Mammary epithelial cell (primary cell): ENCODE measurements at regions of chr1 and their contacts with region 1.

Region 1: GRCh38 chr1:23344111-23344986 is at the start of gene HNRNPR:
- DNase-seq: peak; percentile 100
- H3K4me3 ChIP-seq: peak within 1 kb of the TSS; percentile 78 to 89 (median 83)
- H3K27ac ChIP-seq: peak within 1 kb of the TSS; percentile 88
- H3K4me1 ChIP-seq: peaks cover 15% of the 10 kb centered on the region
- H3K27me3 ChIP-seq: no peaks in the 10 kb centered on the region
- CTCF ChIP-seq: peak in 1 of 2 donors; percentile 13
- total RNA-seq, gene HNRNPR: 35.2 to 133 TPM

Region 2: GRCh38 chr1:23394684-23395083 is 50.3 kb after region 1 on chr1:
- CTCF ChIA-PET with region 1: interaction called, 3 read pairs
- dilution Hi-C with region 1: loop called (anchors 5 kb)
- in situ Hi-C with region 1: no loop called
- intact Hi-C with region 1: no loop called
- DNase-seq: no peak
- H3K4me3 ChIP-seq: no peak overlapping the region
- H3K27ac ChIP-seq: no peak overlapping the region
- H3K4me1 ChIP-seq: peaks cover 6% of the 10 kb centered on the region
- H3K27me3 ChIP-seq: no peaks in the 10 kb centered on the region
- CTCF ChIP-seq: no peak

Region 3: DNA sequence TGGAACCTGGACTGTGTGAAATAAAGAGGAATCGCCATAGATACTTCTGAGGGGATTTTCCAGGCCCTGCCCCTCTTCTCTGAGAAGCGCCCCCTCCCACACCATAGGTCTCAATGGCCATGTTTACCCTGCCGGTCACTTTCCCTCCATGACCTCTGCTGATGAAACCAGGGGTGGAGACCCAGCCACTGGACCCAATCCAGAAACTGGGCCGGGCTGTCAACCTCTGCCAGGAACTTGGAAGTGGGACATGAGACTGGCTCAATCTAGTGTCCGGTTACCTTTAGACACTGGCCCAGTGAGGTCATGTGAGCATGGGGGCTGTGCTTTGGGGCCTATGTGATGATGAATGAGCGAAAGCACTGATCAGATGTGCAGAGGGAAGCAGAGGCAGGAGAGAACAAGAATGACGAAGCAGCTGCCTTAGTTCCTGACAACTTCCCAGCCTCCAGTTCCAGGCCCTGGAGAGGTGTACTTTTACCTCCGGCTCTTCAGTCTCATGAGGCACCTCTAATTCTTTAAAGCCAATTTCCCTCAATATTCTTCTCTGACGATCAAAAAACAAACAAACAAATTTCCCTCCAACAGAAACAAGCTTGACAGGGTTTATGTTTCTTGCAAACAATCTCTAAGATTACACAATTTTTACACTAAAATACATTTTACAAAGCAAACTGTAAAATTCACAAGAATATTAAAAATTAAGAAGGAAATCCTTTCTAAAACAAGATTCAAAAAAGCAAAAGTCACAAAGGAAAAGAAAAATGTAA is 134.7 kb after region 1 on chr1:
- CTCF ChIA-PET with region 1: no interaction called
- dilution Hi-C with region 1: no loop called
- in situ Hi-C with region 1: no loop called
- intact Hi-C with region 1: loop called (anchors 1 kb)
- DNase-seq: no peak
- H3K4me3 ChIP-seq: no peak overlapping the region
- H3K27ac ChIP-seq: no peak overlapping the region
- H3K4me1 ChIP-seq: peaks cover 43% of the 10 kb centered on the region
- H3K27me3 ChIP-seq: no peaks in the 10 kb centered on the region
- CTCF ChIP-seq: no peak